WTC11 (cell line): ENCODE measurements at regions of chr17 and their contacts with region 1.

Region 1: GRCh38 chr17:2521257-2521656 is 9.6 kb upstream of the METTL16 start:
- DNase-seq: no peak
- ATAC-seq: no peak
- H3K4me3 Mint-ChIP-seq: no peak overlapping the region
- H3K27ac Mint-ChIP-seq: no peak overlapping the region
- H3K4me1 Mint-ChIP-seq: no peaks in the 10 kb centered on the region
- H3K27me3 Mint-ChIP-seq: no peaks in the 10 kb centered on the region
- CTCF ChIP-seq: no peak

Region 2: DNA sequence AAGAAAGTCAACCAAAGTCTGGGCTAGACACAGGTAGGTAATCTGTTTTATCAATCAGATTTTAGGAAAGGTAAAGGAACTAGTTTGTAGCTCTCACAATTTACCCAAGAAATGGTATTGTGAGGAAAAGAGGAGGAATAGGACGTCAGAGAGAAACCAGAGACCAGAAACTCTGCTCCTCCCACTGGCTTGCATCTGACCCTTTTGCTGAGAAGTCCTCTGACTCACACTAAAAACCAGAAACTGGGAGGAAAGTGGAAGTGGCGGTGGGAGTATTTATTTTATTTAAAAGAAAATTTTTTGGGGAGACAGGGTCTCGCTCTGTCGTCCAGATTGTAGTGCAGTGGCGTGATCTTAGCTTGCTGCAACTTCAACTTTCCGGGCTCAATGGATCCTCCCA is 82.4 kb before region 1 on chr17:
- CTCF ChIA-PET with region 1: no interaction called
- POLR2A ChIA-PET with region 1: no interaction called
- DNase-seq: no peak
- ATAC-seq: no peak
- H3K4me3 Mint-ChIP-seq: no peak overlapping the region
- H3K27ac Mint-ChIP-seq: no peak overlapping the region
- H3K4me1 Mint-ChIP-seq: peaks cover 27% of the 10 kb centered on the region
- H3K27me3 Mint-ChIP-seq: no peaks in the 10 kb centered on the region
- CTCF ChIP-seq: no peak

Region 3: GRCh38 chr17:2592971-2593820 is 71.9 kb after region 1 on chr17 and contains the start of gene PAFAH1B1:
- CTCF ChIA-PET with region 1: interaction called, 11 read pairs
- POLR2A ChIA-PET with region 1: no interaction called
- DNase-seq: peak; percentile 93
- ATAC-seq: peak; percentile 88
- H3K4me3 Mint-ChIP-seq: peak within 1 kb of the TSS; percentile 91
- H3K27ac Mint-ChIP-seq: peak within 1 kb of the TSS; percentile 98
- H3K4me1 Mint-ChIP-seq: peaks cover 26% of the 10 kb centered on the region
- H3K27me3 Mint-ChIP-seq: no peaks in the 10 kb centered on the region; the same call in 1 of the 2 replicates
- CTCF ChIP-seq: no peak
- total RNA-seq, gene PAFAH1B1: 113 to 115 TPM (median 114 TPM) in 3 replicates